Activated CD4-positive, alpha-beta T cell treated with anti-CD3 and anti-CD28 coated beads for 36 hours (primary cell): ENCODE measurements at regions of chr11 and their contacts with region 1.

Region 1: DNA sequence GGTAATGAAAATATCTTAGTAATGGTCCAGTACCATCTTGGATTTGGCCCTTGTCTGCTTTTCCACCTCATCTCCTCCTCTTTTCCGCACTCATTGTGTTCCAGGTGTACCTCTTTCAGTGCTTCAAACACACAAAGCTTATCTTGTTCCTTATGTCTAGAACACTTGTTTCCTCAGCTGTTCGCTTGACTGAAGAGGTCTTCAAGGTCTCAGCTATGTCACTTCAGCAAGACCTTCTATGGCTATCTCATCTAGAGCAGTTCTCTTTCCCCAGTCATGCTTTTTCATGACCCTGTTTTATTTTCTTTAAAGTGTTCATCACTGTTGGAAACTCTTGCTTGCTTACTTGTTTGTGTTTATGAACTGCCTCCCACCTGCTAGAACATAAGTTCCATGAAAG is 47.4 kb downstream of the UVRAG start:
- DNase-seq: no peak
- ATAC-seq: no peak
- H3K4me3 Mint-ChIP-seq: no peak overlapping the region
- H3K27ac Mint-ChIP-seq: no peak overlapping the region
- H3K4me1 Mint-ChIP-seq: peaks cover 10% of the 10 kb centered on the region
- H3K27me3 Mint-ChIP-seq: no peaks in the 10 kb centered on the region

Region 2: DNA sequence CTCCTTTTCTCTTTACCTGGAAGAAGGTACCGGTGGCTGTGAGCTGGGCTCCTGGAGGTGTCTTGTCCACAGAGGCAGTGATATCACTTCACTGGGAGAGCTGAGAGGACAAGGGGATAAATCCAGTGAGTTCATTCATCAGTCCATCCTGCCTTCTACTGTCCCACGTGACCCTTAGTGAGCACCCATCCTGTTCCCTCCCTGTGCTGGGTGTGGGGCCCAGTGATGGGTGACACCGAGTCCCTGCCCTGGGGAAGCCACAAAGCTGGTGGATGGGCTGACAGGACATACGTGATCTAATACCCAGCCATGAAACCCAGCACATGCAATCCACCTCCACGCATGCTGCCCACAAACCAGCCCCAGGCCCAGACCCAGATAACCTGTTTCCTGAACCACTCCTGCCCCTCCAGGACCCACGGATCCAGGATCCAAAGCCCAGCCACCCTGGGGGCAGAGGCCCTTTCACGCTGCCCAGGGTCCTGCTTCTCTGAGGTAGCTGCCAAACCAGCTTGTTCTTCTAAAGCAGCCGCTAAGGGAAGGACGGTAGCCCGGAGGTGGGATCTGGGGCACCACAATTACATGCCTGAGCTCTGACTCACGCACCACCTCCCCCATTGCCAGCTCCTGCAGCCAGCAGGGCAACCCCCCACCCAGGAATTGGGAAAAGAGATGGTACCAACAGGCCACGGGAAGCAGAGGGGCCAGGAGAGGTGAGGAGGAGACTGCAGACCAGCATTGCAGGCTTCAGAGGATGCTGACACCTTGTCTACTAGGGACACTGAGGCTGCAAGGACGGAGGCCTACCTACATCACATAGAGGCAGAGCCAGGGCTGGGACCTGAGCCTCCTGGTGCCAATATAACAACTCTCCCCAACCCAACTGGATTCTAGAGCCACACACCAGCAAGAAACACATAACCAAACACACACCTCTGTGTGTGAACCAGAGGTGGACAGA is 371.9 kb before region 1 on chr11:
- CTCF ChIA-PET with region 1: no interaction called
- POLR2A ChIA-PET with region 1: no interaction called
- intact Hi-C with region 1: no loop called
- DNase-seq: no peak
- ATAC-seq: no peak
- H3K4me3 Mint-ChIP-seq: no peak overlapping the region
- H3K27ac Mint-ChIP-seq: no peak overlapping the region
- H3K4me1 Mint-ChIP-seq: peaks cover 20% of the 10 kb centered on the region
- H3K27me3 Mint-ChIP-seq: no peaks in the 10 kb centered on the region

Region 3: DNA sequence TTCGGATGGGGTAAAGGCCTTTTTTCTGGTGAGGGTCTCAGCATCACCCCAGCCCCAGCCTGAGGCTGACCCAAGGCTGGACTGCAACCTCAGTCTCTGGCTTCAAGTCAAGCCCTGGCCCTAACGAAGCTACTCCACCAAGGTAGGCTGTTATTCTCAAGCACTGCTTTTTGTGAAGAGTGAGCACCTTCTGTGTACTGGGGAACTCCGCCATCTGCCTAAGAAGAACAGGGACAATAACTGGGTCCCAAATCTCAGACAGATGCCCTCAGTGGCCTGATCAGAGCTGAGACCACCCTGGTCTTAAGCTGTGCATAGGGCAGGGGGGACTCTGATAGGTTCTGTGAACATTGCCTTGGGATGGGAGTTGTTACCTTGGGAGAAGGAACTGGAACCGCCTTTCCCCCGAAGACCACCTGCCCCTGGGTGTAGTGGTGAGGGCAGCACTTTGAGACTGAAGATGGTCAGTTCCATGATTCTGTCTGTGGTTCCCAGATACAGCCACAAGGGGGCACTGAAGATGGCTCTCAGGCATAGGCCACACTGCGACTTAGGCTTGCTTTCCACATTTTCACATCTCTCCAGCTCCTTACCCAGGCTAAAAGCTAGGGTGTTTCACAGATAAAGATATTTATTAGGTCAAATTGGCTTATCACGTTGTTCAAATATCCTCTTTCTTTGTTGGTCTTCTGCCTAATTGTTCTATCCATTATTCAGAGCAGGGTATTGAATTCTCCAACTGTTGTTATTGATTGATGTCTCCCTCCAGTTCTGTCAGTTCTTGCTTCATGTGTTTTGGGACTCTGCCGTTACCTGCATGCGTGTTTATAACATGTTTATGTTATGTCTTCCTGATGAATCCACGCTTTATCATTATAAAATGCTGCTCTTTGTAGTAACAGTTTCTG is 59.3 kb before region 1 on chr11:
- CTCF ChIA-PET with region 1: interaction called, 79 read pairs
- POLR2A ChIA-PET with region 1: no interaction called
- intact Hi-C with region 1: loop called (anchors 1 kb)
- DNase-seq: peak; percentile 84
- ATAC-seq: peak; percentile 92
- H3K4me3 Mint-ChIP-seq: no peak overlapping the region
- H3K27ac Mint-ChIP-seq: no peak overlapping the region
- H3K4me1 Mint-ChIP-seq: peaks cover 10% of the 10 kb centered on the region
- H3K27me3 Mint-ChIP-seq: no peaks in the 10 kb centered on the region